ENCODE measurements at regions of chr20 and their contacts with region 1.

Region 1: DNA sequence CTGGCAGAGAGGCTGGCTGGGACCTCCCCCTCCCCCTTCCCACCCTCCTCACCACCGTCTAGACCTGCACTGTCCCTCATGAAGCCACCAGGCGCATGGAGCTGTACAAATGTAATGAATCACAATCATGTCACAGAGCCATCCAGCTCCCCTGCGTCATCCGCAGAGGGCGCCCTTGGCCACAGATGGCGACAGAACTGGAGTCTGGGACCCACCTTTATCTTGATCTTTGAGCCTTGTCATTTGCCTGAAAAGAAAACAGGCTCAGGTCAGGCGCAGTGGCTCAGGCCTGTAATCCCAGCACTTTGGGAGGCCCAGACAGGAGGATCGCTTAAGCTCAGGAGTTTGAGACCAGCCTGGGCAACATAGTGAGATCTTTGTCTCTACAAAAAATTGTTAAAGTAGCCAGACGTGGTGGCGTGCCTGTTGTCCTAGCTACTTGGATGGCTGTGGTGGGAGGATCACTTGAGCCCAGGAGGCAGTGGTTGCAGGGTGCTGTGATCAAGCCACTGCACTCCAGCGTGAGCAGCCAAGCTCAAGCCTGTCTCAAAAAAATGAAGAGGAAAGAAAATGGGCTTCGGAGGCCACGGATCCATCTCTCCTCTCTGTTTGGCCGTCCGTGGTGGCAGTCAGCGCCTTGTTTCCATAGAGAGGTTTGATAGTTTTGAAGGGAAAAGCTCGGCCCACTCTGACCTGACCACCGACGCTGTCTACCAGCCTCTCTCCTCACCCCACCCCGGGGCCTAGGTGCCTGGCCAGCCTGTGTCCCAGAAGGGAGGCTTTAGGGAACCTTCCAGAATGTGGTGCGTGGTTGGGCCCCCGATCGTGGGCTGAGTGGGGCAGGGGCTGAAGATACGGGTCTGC is 6.2 kb downstream of the COL9A3 start:
- DNase-seq: peak; percentile 89
- H3K4me3 ChIP-seq: no peak overlapping the region
- H3K27ac ChIP-seq: peak overlapping the region in 1 of 2 experiments; percentile 56; a peak in 1 of 4 replicates
- H3K4me1 ChIP-seq: peaks cover 19 to 58% of the 10 kb centered on the region in 2 experiments; a peak in 3 of 4 replicates
- H3K27me3 ChIP-seq: no peaks in the 10 kb centered on the region
- CTCF ChIP-seq: peak; percentile 61
- EP300 ChIP-seq: 0 out of 4 replicates have a peak, but pooled peaks of 1 of the 2 experiments have one; percentile 35
- RAD21 ChIP-seq: peak; percentile 88

Region 2: GRCh38 chr20:62623488-62624324 is 199.3 kb before region 1 on chr20:
- CTCF ChIA-PET with region 1: no interaction called
- POLR2A ChIA-PET with region 1: no interaction called
- DNase-seq: peak; percentile 93
- H3K4me3 ChIP-seq: no peak overlapping the region
- H3K27ac ChIP-seq: peak overlapping the region in 1 of 2 experiments; percentile 61; a peak in 2 of 4 replicates
- H3K4me1 ChIP-seq: peaks cover 9 to 33% of the 10 kb centered on the region in 2 experiments; a peak in 3 of 4 replicates
- H3K27me3 ChIP-seq: no peaks in the 10 kb centered on the region
- CTCF ChIP-seq: no peak
- EP300 ChIP-seq: no peak
- RAD21 ChIP-seq: no peak

Region 3: GRCh38 chr20:62808211-62808865 is 14.7 kb before region 1 on chr20:
- CTCF ChIA-PET with region 1: interaction called, 27 read pairs
- POLR2A ChIA-PET with region 1: interaction called, 3 read pairs
- DNase-seq: peak; percentile 93
- H3K4me3 ChIP-seq: peak overlapping the region in 1 of 2 experiments; percentile 44; a peak in 1 of 4 replicates
- H3K27ac ChIP-seq: no peak overlapping the region
- H3K4me1 ChIP-seq: peaks cover 10 to 27% of the 10 kb centered on the region in 2 experiments; a peak in 2 of 4 replicates
- H3K27me3 ChIP-seq: no peaks in the 10 kb centered on the region
- CTCF ChIP-seq: peak; percentile 93
- EP300 ChIP-seq: no peak
- RAD21 ChIP-seq: peak; percentile 74

Region 4: GRCh38 chr20:62837800-62838454 is 14.9 kb after region 1 on chr20:
- CTCF ChIA-PET with region 1: interaction called, 21 read pairs
- POLR2A ChIA-PET with region 1: no interaction called
- DNase-seq: peak; percentile 92
- H3K4me3 ChIP-seq: no peak overlapping the region
- H3K27ac ChIP-seq: peak overlapping the region in 1 of 2 experiments; percentile 35; a peak in 1 of 4 replicates
- H3K4me1 ChIP-seq: peaks cover 0 to 11% of the 10 kb centered on the region in 2 experiments; a peak in 1 of 4 replicates
- H3K27me3 ChIP-seq: no peaks in the 10 kb centered on the region
- CTCF ChIP-seq: no peak
- EP300 ChIP-seq: 0 out of 4 replicates have a peak, but pooled peaks of 1 of the 2 experiments have one; percentile 18
- RAD21 ChIP-seq: no peak

Region 5: DNA sequence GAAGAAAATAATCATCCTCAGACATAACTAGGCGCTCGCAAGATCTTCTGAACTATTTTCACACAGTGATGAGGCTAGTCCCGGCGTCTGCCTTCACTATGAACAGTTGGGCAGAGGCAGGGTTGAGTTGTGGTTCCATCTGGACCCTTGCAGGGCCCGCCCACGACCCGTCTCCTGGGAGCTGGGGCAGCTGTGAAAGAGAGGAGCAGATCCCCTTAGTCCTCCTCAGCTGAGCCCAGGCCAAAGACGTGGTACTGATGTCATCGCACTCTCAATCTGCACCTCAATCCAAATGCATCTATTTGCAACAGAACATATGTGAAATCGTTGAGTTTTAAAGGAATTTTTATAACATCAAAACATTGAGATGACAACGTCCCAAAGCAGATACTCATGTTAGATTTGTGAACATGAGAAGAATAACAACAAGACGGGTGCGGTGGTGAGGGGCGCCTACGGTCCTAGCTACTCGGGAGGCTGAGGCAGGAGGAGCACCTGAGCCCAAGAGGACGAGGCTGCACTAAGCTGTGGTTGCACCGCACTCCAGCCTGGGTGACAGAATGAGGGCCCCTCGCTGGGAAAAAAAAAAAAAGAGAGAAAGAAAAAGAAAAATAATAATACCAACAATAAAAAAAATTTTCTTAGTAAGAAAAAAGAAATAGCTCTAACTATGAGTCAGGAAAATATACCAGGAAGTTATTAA is 23.3 kb after region 1 on chr20:
- CTCF ChIA-PET with region 1: interaction called, 40 read pairs
- POLR2A ChIA-PET with region 1: no interaction called
- DNase-seq: no peak
- H3K4me3 ChIP-seq: no peak overlapping the region
- H3K27ac ChIP-seq: no peak overlapping the region
- H3K4me1 ChIP-seq: no peaks in the 10 kb centered on the region
- H3K27me3 ChIP-seq: no peaks in the 10 kb centered on the region
- CTCF ChIP-seq: no peak
- EP300 ChIP-seq: no peak
- RAD21 ChIP-seq: no peak

Region 6: GRCh38 chr20:62861726-62862336 is 38.8 kb after region 1 on chr20 and contains the start of gene TCFL5:
- CTCF ChIA-PET with region 1: interaction called, 12 read pairs
- POLR2A ChIA-PET with region 1: no interaction called
- DNase-seq: peak; percentile 99
- H3K4me3 ChIP-seq: peak within 1 kb of the TSS; percentile 63 to 68
- H3K27ac ChIP-seq: no peak within 1 kb of the TSS
- H3K4me1 ChIP-seq: peaks cover 10 to 16% of the 10 kb centered on the region in 2 experiments; a peak in 3 of 4 replicates
- H3K27me3 ChIP-seq: no peaks in the 10 kb centered on the region
- CTCF ChIP-seq: no peak
- EP300 ChIP-seq: no peak
- RAD21 ChIP-seq: no peak
- polyA plus RNA-seq, gene TCFL5: 10.1 and 11.2 TPM in 2 replicates

Region 7: GRCh38 chr20:63009045-63009961 is 186.3 kb after region 1 on chr20:
- CTCF ChIA-PET with region 1: interaction called, 10 read pairs
- POLR2A ChIA-PET with region 1: no interaction called
- DNase-seq: peak; percentile 95
- H3K4me3 ChIP-seq: no peak overlapping the region; a peak in 1 of 4 replicates
- H3K27ac ChIP-seq: no peak overlapping the region
- H3K4me1 ChIP-seq: peaks cover 0 to 3% of the 10 kb centered on the region in 2 experiments; a peak in 1 of 4 replicates
- H3K27me3 ChIP-seq: peaks cover 92% of the 10 kb centered on the region
- CTCF ChIP-seq: peak; percentile 90
- EP300 ChIP-seq: no peak
- RAD21 ChIP-seq: peak; percentile 90

Measured in SK-N-SH (cell line).